GM12878 (cell line): ENCODE measurements at regions of chr5 and their contacts with region 1.

Region 1: GRCh38 chr5:317086-317811 is 4.3 kb upstream of the AHRR start:
- DNase-seq: no peak
- ATAC-seq: peak; percentile 89
- H3K4me3 ChIP-seq: no peak overlapping the region
- H3K27ac ChIP-seq: no peak overlapping the region; the same call in 1 of the 2 replicates
- H3K4me1 ChIP-seq: peaks cover 23% of the 10 kb centered on the region
- H3K27me3 ChIP-seq: no peaks in the 10 kb centered on the region
- CTCF ChIP-seq: peak; percentile 95 to 99 (median 98); a peak in 5 of 6 replicates
- EP300 ChIP-seq: peak in 1 of 2 experiments; percentile 36; a peak in 1 of 4 replicates
- POLR2A ChIP-seq: no peak; the same call in 1 of the 2 replicates
- RAD21 ChIP-seq: peak; percentile 94

Region 2: GRCh38 chr5:56574-57290 is 260.5 kb before region 1 on chr5:
- CTCF ChIA-PET with region 1: no interaction called
- POLR2A ChIA-PET with region 1: no interaction called
- RAD21 ChIA-PET with region 1: no interaction called
- SMC1A ChIA-PET with region 1: no interaction called
- in situ Hi-C with region 1: no loop called
- intact Hi-C with region 1: no loop called
- DNase-seq: no peak
- ATAC-seq: no peak
- H3K4me3 ChIP-seq: no peak overlapping the region
- H3K27ac ChIP-seq: no peak overlapping the region
- H3K4me1 ChIP-seq: no peaks in the 10 kb centered on the region
- H3K27me3 ChIP-seq: no peaks in the 10 kb centered on the region
- CTCF ChIP-seq: no peak
- EP300 ChIP-seq: no peak
- POLR2A ChIP-seq: no peak
- RAD21 ChIP-seq: no peak

Region 3: DNA sequence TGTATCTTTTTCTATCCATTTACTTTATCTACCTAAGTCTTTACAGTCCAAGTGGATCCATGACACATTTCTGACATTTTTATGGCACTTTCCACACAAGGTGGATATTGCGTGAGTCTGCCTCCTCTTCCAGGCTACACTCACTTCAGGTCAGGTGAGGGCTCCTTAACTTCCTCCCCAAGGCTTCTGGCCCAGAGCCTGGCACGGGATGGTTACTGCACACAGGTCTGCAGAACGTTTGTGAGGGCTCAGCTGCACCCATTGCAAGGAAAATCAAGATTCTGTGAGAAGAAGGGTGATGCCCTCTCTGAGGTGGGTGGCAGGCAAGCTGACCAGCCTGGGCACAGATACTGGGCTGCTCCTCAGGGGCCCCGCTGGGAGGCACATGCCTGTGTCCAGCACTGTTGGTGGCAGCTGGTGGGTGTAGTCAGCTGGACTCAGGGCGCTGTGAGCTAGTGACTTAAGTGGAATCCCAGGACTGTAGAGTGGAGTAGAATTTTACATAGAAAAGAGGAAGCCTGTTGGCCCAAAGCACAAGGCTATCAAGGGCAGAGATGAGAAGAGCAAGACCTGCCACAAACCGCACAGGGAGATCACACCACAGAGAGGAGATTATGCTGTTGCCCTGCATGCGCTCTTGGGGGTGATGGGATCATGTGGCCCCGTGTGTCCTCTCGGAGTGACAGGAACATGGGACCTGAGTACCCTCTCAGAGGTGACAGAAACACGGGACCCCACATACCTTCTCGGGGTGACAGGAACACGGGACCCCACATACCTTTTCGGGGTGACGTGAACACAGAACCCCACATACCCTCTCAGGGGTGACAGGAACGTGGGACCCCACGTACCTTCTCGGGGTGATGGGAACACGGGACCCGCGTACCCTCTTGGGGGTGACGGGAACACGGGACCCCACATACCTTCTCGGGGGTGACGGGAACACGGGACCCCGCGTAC is 25.5 kb after region 1 on chr5:
- CTCF ChIA-PET with region 1: interaction called, 8 read pairs
- POLR2A ChIA-PET with region 1: interaction called, 5 read pairs
- RAD21 ChIA-PET with region 1: interaction called, 10 read pairs
- SMC1A ChIA-PET with region 1: interaction called, 19 read pairs
- in situ Hi-C with region 1: no loop called
- intact Hi-C with region 1: no loop called
- DNase-seq: no peak
- ATAC-seq: peak; percentile 75
- H3K4me3 ChIP-seq: peak overlapping the region; percentile 64
- H3K27ac ChIP-seq: peak overlapping the region; percentile 84
- H3K4me1 ChIP-seq: peaks cover 34% of the 10 kb centered on the region
- H3K27me3 ChIP-seq: no peaks in the 10 kb centered on the region
- CTCF ChIP-seq: no peak
- EP300 ChIP-seq: no peak
- POLR2A ChIP-seq: no peak
- RAD21 ChIP-seq: no peak

Region 4: DNA sequence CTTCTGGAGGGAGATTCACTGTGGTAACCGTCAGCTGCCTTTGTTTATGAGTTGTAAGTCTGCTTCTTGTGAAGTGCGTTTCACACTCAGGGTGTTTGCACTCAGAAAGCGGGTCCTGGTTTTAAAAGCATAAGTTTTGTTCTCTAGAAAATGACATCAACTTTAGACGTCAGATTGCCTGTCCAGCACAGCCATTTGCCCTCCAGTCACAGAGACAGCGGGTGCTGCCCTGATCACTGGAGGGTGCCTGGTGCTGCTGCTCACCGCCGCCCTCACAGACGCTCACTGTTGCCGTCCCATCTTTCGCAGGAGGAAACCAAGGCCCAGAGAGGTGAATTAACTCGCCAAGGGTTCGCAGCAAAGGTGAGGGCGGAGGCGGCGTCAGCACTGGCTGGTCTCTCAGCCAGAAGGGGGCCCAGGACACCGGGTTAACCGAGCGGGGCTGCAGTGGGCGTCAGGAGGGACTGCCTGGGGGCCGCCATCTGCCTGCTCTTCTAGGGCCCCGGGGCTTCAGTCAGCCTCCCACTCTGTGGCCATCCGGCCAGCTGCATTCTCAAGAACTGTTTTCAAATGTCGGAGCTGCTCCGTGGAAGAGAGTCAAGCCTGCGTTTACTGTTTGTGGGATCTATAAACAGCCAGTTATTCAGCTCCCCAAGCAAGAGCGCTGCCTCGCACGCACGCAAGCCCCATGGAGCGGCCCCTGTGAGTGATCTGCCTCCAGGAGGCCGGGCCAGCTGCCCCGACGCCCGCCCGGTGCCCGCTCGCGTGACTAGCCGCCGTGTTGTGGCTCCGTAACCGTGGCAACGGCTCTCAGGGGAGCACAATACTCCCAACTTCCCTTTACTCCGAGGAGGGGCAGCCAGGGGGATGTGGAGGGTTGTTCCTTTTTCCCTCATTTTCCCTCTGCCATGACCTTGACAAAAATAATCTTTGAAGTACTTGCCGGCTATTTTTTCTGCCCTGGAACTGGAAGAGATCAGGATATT is 82.3 kb after region 1 on chr5:
- CTCF ChIA-PET with region 1: interaction called, 7 read pairs
- POLR2A ChIA-PET with region 1: no interaction called
- RAD21 ChIA-PET with region 1: interaction called, 10 read pairs
- SMC1A ChIA-PET with region 1: interaction called, 3 read pairs
- in situ Hi-C with region 1: no loop called
- intact Hi-C with region 1: no loop called
- DNase-seq: peak; percentile 49
- ATAC-seq: peak; percentile 87
- H3K4me3 ChIP-seq: no peak overlapping the region
- H3K27ac ChIP-seq: peak overlapping the region; percentile 95
- H3K4me1 ChIP-seq: peaks cover 56% of the 10 kb centered on the region
- H3K27me3 ChIP-seq: no peaks in the 10 kb centered on the region
- CTCF ChIP-seq: no peak
- EP300 ChIP-seq: peak; percentile 88 to 99; a peak in 3 of 4 replicates
- POLR2A ChIP-seq: peak; percentile 63
- RAD21 ChIP-seq: no peak

Region 5: DNA sequence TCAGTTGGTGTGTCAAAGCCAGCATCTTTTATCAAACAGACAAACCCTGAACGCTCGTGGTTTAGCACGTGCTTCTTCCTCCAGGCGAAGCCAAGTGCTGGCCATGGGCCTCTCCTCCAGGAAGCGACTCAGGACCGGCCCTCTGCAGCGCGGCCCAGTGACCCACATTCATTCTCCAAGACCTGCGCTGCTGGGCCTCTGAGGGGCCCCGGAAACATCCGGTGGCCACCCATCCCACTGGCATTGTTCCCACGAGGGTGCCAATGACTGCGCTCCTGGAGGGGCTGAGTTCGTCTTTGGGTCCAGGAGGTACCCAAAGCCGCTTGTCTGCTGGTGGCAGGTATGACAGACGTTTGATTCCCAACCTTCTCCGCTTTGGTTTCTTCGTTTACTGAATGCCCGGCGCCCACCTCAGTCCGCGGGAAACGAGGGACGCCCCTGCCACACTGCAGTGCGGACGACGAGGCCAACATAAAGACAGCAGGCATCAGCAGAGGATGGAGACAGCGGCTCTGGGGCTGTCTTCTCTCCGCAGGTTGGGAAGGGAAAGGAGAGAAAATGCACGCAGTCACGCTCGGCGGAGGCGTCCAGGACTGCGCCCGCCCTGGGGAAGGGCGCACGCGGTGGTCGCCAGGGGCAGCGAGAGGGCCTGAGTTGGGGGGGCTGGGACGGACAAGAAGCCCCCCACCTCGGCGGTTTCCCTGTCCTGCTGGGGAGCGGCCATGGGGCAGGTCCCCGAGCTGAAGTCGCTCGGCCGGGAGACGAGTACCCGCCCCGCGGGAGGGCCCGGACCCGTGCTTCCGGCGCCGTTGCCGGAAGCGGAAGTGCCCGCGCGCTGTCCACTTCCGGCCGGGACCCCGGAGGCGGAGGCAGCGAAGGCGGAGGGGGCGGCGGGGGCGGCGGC is 125.3 kb after region 1 on chr5 and contains the start of gene EXOC3:
- CTCF ChIA-PET with region 1: interaction called, 29 read pairs
- POLR2A ChIA-PET with region 1: interaction called, 4 read pairs
- RAD21 ChIA-PET with region 1: interaction called, 30 read pairs
- SMC1A ChIA-PET with region 1: interaction called, 15 read pairs
- in situ Hi-C with region 1: loop called (anchors 5 kb)
- intact Hi-C with region 1: no loop called
- DNase-seq: no peak
- ATAC-seq: peak; percentile 91
- H3K4me3 ChIP-seq: peak within 1 kb of the TSS; percentile 81
- H3K27ac ChIP-seq: peak within 1 kb of the TSS; percentile 81
- H3K4me1 ChIP-seq: peaks cover 23% of the 10 kb centered on the region
- H3K27me3 ChIP-seq: no peaks in the 10 kb centered on the region
- CTCF ChIP-seq: no peak
- EP300 ChIP-seq: no peak
- POLR2A ChIP-seq: peak; percentile 91
- RAD21 ChIP-seq: no peak
- polyA plus RNA-seq, gene EXOC3: 1.6 to 7.2 TPM

Region 6: GRCh38 chr5:657570-657969 is 340.3 kb after region 1 on chr5:
- CTCF ChIA-PET with region 1: no interaction called
- POLR2A ChIA-PET with region 1: no interaction called
- RAD21 ChIA-PET with region 1: interaction called, 4 read pairs
- SMC1A ChIA-PET with region 1: no interaction called
- in situ Hi-C with region 1: no loop called
- intact Hi-C with region 1: loop called (anchors 10 kb)
- DNase-seq: no peak
- ATAC-seq: no peak
- H3K4me3 ChIP-seq: no peak overlapping the region
- H3K27ac ChIP-seq: no peak overlapping the region
- H3K4me1 ChIP-seq: no peaks in the 10 kb centered on the region
- H3K27me3 ChIP-seq: no peaks in the 10 kb centered on the region
- CTCF ChIP-seq: no peak
- EP300 ChIP-seq: no peak
- POLR2A ChIP-seq: no peak
- RAD21 ChIP-seq: no peak